ENCODE measurements at regions of chr1 and their contacts with region 1.

Region 1: GRCh38 chr1:151693076-151693651 is 23.4 kb downstream of the CELF3 start:
- DNase-seq: peak; percentile 36
- ATAC-seq: peak; percentile 62
- H3K4me3 ChIP-seq: no peak overlapping the region
- H3K27ac ChIP-seq: no peak overlapping the region
- H3K4me1 ChIP-seq: no peaks in the 10 kb centered on the region
- H3K27me3 ChIP-seq: no peaks in the 10 kb centered on the region
- CTCF ChIP-seq: peak; percentile 77
- EP300 ChIP-seq: no peak
- POLR2A ChIP-seq: no peak
- RAD21 ChIP-seq: peak; percentile 69

Region 2: GRCh38 chr1:151574545-151575529 is 118.3 kb before region 1 on chr1:
- CTCF ChIA-PET with region 1: no interaction called
- POLR2A ChIA-PET with region 1: no interaction called
- in situ Hi-C with region 1: no loop called
- intact Hi-C with region 1: no loop called
- DNase-seq: no peak
- ATAC-seq: no peak
- H3K4me3 ChIP-seq: no peak overlapping the region
- H3K27ac ChIP-seq: no peak overlapping the region
- H3K4me1 ChIP-seq: peaks cover 12% of the 10 kb centered on the region
- H3K27me3 ChIP-seq: no peaks in the 10 kb centered on the region
- CTCF ChIP-seq: no peak
- EP300 ChIP-seq: no peak
- POLR2A ChIP-seq: no peak
- RAD21 ChIP-seq: no peak

Region 3: DNA sequence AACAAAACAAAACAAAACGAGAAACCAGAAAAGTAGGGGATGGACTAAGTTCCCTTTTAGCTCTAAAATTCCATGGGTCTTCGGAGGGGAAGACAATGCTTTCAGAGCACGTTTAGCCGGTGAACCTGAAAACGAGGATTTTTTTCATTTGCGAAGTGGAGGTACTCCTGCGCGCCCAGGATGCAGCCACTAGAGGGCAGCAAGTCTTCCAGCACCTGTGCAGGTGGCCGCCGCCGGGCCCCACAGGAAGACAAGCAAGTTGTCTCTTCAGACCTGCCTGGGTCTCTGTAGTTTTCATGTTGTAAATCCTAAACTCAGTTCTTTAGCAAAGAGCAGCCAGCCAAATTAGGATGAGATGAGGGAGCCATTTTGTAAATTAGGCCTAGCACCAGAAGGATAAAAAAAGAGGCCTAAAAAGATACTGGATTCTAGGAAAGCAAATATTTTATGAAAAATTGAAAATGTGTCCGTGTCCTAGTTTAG is 99.0 kb before region 1 on chr1:
- CTCF ChIA-PET with region 1: interaction called, 5 read pairs
- POLR2A ChIA-PET with region 1: no interaction called
- in situ Hi-C with region 1: no loop called
- intact Hi-C with region 1: loop called (anchors 10 kb)
- DNase-seq: peak; percentile 59
- ATAC-seq: peak; percentile 92
- H3K4me3 ChIP-seq: peak overlapping the region in 2 of 3 experiments; percentile 15 to 21; a peak in 2 of 6 replicates
- H3K27ac ChIP-seq: no peak overlapping the region
- H3K4me1 ChIP-seq: peaks cover 34% of the 10 kb centered on the region
- H3K27me3 ChIP-seq: peaks cover 0 to 3% of the 10 kb centered on the region in 2 experiments; a peak in 1 of 5 replicates
- CTCF ChIP-seq: peak; percentile 91
- EP300 ChIP-seq: no peak
- POLR2A ChIP-seq: no peak
- RAD21 ChIP-seq: peak; percentile 80

Region 4: DNA sequence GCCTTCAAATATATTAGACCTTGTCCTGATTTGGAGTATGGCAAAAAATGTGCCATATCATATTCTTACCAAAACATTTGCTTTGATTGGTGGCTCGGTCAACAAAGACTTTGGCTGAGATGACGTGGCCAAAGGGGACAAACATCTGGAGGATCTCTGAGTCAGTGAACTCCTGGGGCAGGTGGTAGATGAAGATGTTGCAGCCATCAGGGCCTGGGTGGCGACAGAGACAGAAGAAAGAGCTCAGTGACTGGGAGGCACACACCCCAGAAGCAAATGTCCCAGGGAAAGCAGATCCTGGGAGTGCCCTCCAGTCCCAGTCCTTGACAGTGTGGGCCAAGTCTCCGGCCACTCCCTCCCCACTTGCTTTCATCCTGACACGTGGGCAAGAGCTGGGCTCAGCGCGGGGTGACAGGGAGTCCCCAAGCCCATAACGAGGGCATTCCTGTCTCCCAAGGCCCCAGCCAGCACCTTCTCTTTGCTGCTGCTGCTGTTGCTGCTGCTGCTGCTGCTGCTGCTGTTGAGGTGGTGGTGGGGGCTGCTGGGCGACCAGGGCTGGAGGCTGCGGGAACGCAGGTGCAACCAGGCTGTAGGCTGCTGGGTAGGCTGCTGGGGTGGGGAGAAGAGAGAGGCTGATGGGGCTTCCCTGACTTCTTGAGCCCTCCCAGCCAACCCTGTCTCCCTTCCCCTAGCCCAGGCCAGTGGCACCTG is 12.7 kb after region 1 on chr1:
- CTCF ChIA-PET with region 1: no interaction called
- POLR2A ChIA-PET with region 1: no interaction called
- in situ Hi-C with region 1: no loop called
- intact Hi-C with region 1: no loop called
- DNase-seq: no peak
- ATAC-seq: no peak; the same call in 1 of the 3 replicates
- H3K4me3 ChIP-seq: peak overlapping the region in 1 of 3 experiments; percentile 16; a peak in 1 of 6 replicates
- H3K27ac ChIP-seq: no peak overlapping the region
- H3K4me1 ChIP-seq: peaks cover 55% of the 10 kb centered on the region
- H3K27me3 ChIP-seq: no peaks in the 10 kb centered on the region
- CTCF ChIP-seq: peak; percentile 34
- EP300 ChIP-seq: no peak
- POLR2A ChIP-seq: no peak
- RAD21 ChIP-seq: no peak